ENCODE measurements at regions of chr7 and their contacts with region 1.

Region 1: GRCh38 chr7:106009403-106010226 is 46.6 kb downstream of the CDHR3 start:
- DNase-seq: peak; percentile 91
- H3K4me3 Mint-ChIP-seq: no peak overlapping the region
- H3K27ac Mint-ChIP-seq: no peak overlapping the region
- H3K4me1 Mint-ChIP-seq: peaks cover 24% of the 10 kb centered on the region
- H3K27me3 Mint-ChIP-seq: peaks cover 2% of the 10 kb centered on the region

Region 2: DNA sequence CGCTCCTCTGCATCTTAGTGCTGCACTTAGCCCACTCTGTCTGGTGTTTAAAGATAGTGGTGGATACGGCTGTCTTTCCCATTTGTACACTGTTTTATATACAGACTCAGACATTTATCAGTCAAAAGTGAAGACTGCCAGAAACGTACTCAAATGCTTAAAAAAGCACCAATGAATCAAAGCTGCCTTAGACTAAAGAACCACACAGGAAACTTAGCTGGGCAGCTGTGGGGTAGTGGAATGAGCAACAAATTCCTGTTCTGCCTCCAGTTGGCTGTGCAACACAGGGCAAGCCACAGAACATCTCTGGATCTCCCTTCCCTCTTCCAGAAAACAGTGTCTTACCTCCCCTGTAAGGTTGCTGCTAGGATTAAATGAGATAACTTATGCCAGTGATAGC is 209.2 kb before region 1 on chr7:
- CTCF ChIA-PET with region 1: interaction called, 5 read pairs
- POLR2A ChIA-PET with region 1: no interaction called
- intact Hi-C with region 1: loop called (anchors 1 kb)
- DNase-seq: peak; percentile 76
- H3K4me3 Mint-ChIP-seq: no peak overlapping the region
- H3K27ac Mint-ChIP-seq: no peak overlapping the region
- H3K4me1 Mint-ChIP-seq: peaks cover 32% of the 10 kb centered on the region
- H3K27me3 Mint-ChIP-seq: no peaks in the 10 kb centered on the region

Region 3: GRCh38 chr7:105924945-105925344 is 84.7 kb before region 1 on chr7:
- CTCF ChIA-PET with region 1: interaction called, 3 read pairs
- POLR2A ChIA-PET with region 1: no interaction called
- intact Hi-C with region 1: loop called (anchors 1 kb)
- DNase-seq: peak; percentile 50
- H3K4me3 Mint-ChIP-seq: no peak overlapping the region
- H3K27ac Mint-ChIP-seq: peak overlapping the region; percentile 53
- H3K4me1 Mint-ChIP-seq: peaks cover 30% of the 10 kb centered on the region
- H3K27me3 Mint-ChIP-seq: peaks cover 2% of the 10 kb centered on the region

Region 4: GRCh38 chr7:106041140-106041717 is 31.6 kb after region 1 on chr7:
- CTCF ChIA-PET with region 1: interaction called, 5 read pairs
- POLR2A ChIA-PET with region 1: no interaction called
- intact Hi-C with region 1: loop called (anchors 1 kb)
- DNase-seq: peak; percentile 52
- H3K4me3 Mint-ChIP-seq: no peak overlapping the region
- H3K27ac Mint-ChIP-seq: no peak overlapping the region
- H3K4me1 Mint-ChIP-seq: peaks cover 23% of the 10 kb centered on the region
- H3K27me3 Mint-ChIP-seq: peaks cover 2% of the 10 kb centered on the region

Measured in activated CD4-positive, alpha-beta memory T cell treated with anti-CD3 and anti-CD28 coated beads for 36 hours (primary cell).